K562 (cell line): ENCODE measurements at regions of chr16 and their contacts with region 1.

Region 1: GRCh38 chr16:85821441-85822135 is 22.1 kb downstream of the COX4I1 start:
- DNase-seq: peak; percentile 80 to 88 (median 87)
- ATAC-seq: peak; percentile 92
- H3K4me3 ChIP-seq: no peak overlapping the region
- H3K27ac ChIP-seq: no peak overlapping the region
- H3K4me1 ChIP-seq: peaks cover 0 to 7% of the 10 kb centered on the region in 2 experiments; a peak in 1 of 5 replicates
- H3K27me3 ChIP-seq: peaks cover 8 to 38% of the 10 kb centered on the region in 2 experiments; a peak in 3 of 5 replicates
- CTCF ChIP-seq: peak; percentile 93 to 98 (median 95)
- EP300 ChIP-seq: no peak
- POLR2A ChIP-seq: no peak
- RAD21 ChIP-seq: peak; percentile 97 to 99

Region 2: GRCh38 chr16:85898521-85899442 is 77.2 kb after region 1 on chr16 and contains the start of gene IRF8:
- CTCF ChIA-PET with region 1: no interaction called
- POLR2A ChIA-PET with region 1: no interaction called
- in situ Hi-C with region 1: no loop called
- intact Hi-C with region 1: loop called (anchors 5 kb)
- DNase-seq: no peak
- ATAC-seq: no peak
- H3K4me3 ChIP-seq: no peak within 1 kb of the TSS
- H3K27ac ChIP-seq: no peak within 1 kb of the TSS
- H3K4me1 ChIP-seq: peaks cover 0 to 9% of the 10 kb centered on the region in 2 experiments; a peak in 1 of 5 replicates
- H3K27me3 ChIP-seq: peaks cover 64 to 85% of the 10 kb centered on the region in 2 experiments
- CTCF ChIP-seq: no peak
- EP300 ChIP-seq: no peak
- POLR2A ChIP-seq: no peak
- RAD21 ChIP-seq: no peak
- polyA plus RNA-seq, gene IRF8: not detected

Region 3: DNA sequence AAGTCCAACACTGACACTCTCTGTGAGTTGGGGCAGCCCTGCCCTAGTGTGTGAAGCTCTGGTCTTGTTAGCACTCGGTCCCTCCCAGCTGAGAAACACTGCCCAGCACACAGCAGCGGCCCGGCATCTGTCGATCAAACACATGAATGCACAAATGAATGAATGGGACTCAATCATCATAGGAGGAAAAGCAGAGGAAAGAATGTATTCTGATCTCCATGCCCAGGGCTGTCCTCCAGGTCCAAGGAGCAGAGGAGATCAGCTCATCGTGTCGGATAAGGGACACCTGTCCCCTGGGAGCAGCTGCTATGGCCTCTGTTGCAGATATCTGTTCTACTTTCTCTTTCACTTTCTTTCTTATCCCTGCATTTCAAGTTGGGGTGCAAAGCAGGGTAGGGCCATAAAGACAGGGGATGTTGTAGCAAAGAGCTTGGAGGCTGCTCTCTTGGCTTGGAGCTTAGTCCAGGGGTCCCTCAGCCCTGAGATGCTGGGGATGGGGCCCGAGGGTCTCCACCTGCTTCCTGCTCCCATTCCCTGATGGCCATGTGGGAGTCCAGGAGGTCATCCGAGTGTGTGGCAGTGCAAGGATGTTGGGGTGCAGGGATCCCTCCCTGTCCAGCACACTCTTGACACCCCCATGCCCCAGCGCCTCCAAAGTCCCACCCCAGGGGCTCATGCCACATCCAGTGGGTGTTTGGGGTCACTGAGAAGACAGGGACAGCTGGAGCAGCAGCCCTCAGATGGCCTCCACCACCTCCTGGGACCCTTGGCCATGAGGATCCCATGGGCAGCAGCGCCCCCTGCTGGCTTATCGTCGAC is 165.6 kb after region 1 on chr16:
- CTCF ChIA-PET with region 1: interaction called, 41 read pairs
- POLR2A ChIA-PET with region 1: interaction called, 5 read pairs
- in situ Hi-C with region 1: loop called (anchors 5 kb)
- intact Hi-C with region 1: loop called (anchors 1 kb)
- DNase-seq: peak in 1 of 4 experiments; percentile 31
- ATAC-seq: peak; percentile 84
- H3K4me3 ChIP-seq: no peak overlapping the region
- H3K27ac ChIP-seq: no peak overlapping the region
- H3K4me1 ChIP-seq: no peaks in the 10 kb centered on the region
- H3K27me3 ChIP-seq: peaks cover 56 to 72% of the 10 kb centered on the region in 2 experiments
- CTCF ChIP-seq: peak; percentile 27 to 33 (median 29); a peak in 2 of 6 replicates
- EP300 ChIP-seq: no peak
- POLR2A ChIP-seq: no peak
- RAD21 ChIP-seq: peak; percentile 43 to 65

Region 4: DNA sequence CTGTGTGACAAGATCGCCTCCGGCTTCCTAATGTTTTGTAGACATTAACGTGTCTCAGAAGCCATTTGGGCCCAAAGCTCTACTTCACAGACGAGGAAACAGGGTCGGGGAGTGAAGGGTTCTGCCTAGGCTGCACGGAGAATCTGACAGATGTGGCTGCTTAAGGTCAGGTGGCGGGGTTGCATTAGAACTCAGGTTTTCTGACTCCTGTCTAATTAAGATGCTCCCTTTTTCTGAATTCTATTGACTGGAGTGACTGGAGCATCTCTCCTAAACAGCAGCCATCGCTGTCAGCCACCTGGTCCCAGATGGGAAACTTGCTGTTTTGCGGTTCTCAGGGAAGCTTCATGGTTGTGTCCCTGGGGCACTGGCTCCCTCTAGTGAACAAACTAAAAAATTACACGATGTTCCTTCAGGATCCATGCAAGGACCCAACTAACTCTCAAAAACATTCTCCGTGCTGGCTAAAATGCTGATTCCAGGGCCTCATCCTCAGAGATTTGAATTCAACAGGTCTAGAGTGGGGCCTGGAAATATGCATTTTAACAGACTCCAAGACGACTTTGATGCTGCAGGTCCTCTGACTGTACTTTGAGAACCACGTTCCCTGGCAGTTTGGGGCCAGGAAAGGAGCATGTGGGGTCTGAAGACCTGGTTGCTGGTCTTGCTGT is 194.7 kb after region 1 on chr16:
- CTCF ChIA-PET with region 1: interaction called, 23 read pairs
- POLR2A ChIA-PET with region 1: no interaction called
- in situ Hi-C with region 1: no loop called
- intact Hi-C with region 1: loop called (anchors 1 kb)
- DNase-seq: peak; percentile 54 to 78 (median 69)
- ATAC-seq: peak; percentile 76
- H3K4me3 ChIP-seq: no peak overlapping the region
- H3K27ac ChIP-seq: no peak overlapping the region
- H3K4me1 ChIP-seq: no peaks in the 10 kb centered on the region
- H3K27me3 ChIP-seq: no peaks in the 10 kb centered on the region
- CTCF ChIP-seq: peak; percentile 69 to 79 (median 72); a peak in 5 of 6 replicates
- EP300 ChIP-seq: no peak
- POLR2A ChIP-seq: no peak
- RAD21 ChIP-seq: peak; percentile 59 to 77